ENCODE measurements at regions of chr12 and their contacts with region 1.

Region 1: DNA sequence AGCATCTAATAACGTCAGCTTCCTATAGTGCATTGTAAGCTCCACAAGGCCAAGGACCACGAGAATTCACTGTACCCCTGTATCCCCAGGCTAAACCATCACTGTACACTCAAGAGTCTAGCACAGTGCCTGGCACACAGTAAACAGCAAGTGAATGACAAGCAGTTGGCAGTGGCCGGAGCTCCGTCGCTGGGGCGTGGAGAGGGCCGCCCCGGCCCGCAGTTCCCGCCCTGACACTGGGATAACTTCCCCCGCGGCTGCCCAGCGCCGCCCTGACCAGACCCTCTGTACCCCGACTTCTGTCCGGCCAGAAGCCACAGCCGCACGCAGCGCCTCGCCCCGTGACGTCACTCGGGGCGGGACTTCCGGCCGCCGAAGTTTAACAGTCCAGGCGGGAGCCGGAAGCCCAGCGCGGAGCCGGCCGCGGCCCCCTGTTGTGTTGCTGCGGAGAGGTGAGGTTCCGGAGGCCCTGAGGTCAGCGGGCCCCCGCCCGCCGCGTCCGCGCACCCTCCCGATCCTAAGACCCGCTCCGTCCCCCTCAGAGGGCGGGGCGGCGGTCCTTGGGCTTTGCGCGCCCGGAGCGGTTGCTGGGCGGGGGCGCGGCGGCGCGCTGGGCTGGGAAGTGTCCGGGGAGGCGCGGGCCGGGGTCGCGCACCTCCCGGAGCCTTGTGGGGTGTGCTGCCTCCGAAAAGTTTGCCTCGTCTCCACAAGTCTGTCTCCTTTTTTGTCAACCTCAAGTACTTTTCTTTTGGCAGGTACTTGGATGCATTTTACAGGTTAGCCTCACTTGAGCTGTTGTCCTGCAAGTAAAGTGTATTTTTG is at the start of gene NEDD1:
- DNase-seq: peak; percentile 70 to 89 (median 81)
- ATAC-seq: peak; percentile 90
- H3K4me3 ChIP-seq: peak within 1 kb of the TSS; percentile 84
- H3K4me3 Mint-ChIP-seq: peak within 1 kb of the TSS; percentile 89 to 97 (median 95)
- H3K27ac ChIP-seq: peak within 1 kb of the TSS; percentile 99
- H3K27ac Mint-ChIP-seq: peak within 1 kb of the TSS; percentile 96 to 99 (median 98)
- H3K4me1 ChIP-seq: peaks cover 0 to 12% of the 10 kb centered on the region in 2 donors
- H3K4me1 Mint-ChIP-seq: peaks cover 21 to 53% (median 47%) of the 10 kb centered on the region in 7 donors
- H3K27me3 ChIP-seq: no peaks in the 10 kb centered on the region
- H3K27me3 Mint-ChIP-seq: peaks cover 0 to 12% (median 0%) of the 10 kb centered on the region in 5 donors
- total RNA-seq, gene NEDD1: 18.3 to 52.4 (median 23.2) TPM

Region 2: DNA sequence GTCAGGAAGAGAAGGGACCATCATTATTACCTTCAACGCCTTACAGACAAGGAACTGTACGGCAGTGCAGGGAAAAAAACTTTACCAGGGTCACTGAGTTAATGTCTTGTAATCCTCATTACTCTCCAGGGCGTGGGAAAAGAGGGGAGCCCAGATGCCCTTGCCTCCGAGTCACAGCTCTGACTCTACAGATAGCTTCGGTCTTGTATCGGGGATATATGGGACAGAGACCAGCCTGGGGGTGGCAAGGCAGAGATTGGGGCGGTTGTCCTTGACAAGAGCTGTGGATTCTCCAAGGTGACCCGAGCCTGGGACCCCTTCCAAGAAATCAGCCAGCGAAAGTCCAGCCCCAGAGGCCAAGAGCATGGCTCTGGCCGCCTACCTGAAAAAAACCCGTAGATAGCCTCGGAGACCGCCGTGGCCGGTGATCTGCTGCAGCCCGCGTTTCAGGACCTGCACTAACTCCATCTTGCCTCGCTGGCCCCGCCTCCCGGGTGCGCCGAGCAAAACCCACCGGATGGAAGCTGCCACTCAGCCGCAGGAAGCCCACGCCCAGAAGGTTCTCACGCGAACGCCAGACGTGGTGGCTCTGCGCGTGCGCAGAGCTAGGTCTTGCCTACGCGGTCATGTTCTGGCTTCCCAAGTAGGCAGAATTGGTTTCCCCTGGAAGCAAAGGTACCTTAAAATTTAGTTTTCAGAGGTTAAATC is 1903.7 kb before region 1 on chr12 and contains the start of gene NDUFA12:
- CTCF ChIA-PET with region 1: no interaction called
- POLR2A ChIA-PET with region 1: no interaction called
- intact Hi-C with region 1: loop called in 1 of 2 experiments (anchors 5 kb)
- DNase-seq: peak; percentile 89 to 95 (median 92)
- ATAC-seq: peak; percentile 100
- H3K4me3 ChIP-seq: peak within 1 kb of the TSS; percentile 72
- H3K4me3 Mint-ChIP-seq: peak within 1 kb of the TSS; percentile 87 to 97 (median 96)
- H3K27ac ChIP-seq: peak within 1 kb of the TSS; percentile 84
- H3K27ac Mint-ChIP-seq: peak within 1 kb of the TSS; percentile 86 to 97 (median 95)
- H3K4me1 ChIP-seq: peaks cover 27 to 56% of the 10 kb centered on the region in 2 donors
- H3K4me1 Mint-ChIP-seq: peaks cover 39 to 79% (median 64%) of the 10 kb centered on the region in 7 donors
- H3K27me3 ChIP-seq: no peaks in the 10 kb centered on the region
- H3K27me3 Mint-ChIP-seq: no peaks in the 10 kb centered on the region
- total RNA-seq, gene NDUFA12: 57.8 to 123 (median 68.5) TPM

Region 3: GRCh38 chr12:95942524-95943329 is 964.3 kb before region 1 on chr12 and contains the start of gene CCDC38:
- CTCF ChIA-PET with region 1: interaction called, 3 read pairs
- POLR2A ChIA-PET with region 1: no interaction called
- intact Hi-C with region 1: loop called (anchors 2 to 5 kb)
- DNase-seq: peak; percentile 56 to 86 (median 82)
- ATAC-seq: peak; percentile 97
- H3K4me3 ChIP-seq: peak within 1 kb of the TSS; percentile 93
- H3K4me3 Mint-ChIP-seq: peak within 1 kb of the TSS; percentile 88 to 99 (median 96)
- H3K27ac ChIP-seq: peak within 1 kb of the TSS; percentile 86
- H3K27ac Mint-ChIP-seq: peak within 1 kb of the TSS; percentile 85 to 97 (median 89)
- H3K4me1 ChIP-seq: peaks cover 6% of the 10 kb centered on the region in 2 donors
- H3K4me1 Mint-ChIP-seq: peaks cover 4 to 12% (median 10%) of the 10 kb centered on the region in 7 donors
- H3K27me3 ChIP-seq: no peaks in the 10 kb centered on the region
- H3K27me3 Mint-ChIP-seq: peaks cover 0 to 26% (median 0%) of the 10 kb centered on the region in 5 donors
- total RNA-seq, gene CCDC38: 0.07 to 0.27 TPM in 2 of 5 experiments, not detected in the others

Region 4: DNA sequence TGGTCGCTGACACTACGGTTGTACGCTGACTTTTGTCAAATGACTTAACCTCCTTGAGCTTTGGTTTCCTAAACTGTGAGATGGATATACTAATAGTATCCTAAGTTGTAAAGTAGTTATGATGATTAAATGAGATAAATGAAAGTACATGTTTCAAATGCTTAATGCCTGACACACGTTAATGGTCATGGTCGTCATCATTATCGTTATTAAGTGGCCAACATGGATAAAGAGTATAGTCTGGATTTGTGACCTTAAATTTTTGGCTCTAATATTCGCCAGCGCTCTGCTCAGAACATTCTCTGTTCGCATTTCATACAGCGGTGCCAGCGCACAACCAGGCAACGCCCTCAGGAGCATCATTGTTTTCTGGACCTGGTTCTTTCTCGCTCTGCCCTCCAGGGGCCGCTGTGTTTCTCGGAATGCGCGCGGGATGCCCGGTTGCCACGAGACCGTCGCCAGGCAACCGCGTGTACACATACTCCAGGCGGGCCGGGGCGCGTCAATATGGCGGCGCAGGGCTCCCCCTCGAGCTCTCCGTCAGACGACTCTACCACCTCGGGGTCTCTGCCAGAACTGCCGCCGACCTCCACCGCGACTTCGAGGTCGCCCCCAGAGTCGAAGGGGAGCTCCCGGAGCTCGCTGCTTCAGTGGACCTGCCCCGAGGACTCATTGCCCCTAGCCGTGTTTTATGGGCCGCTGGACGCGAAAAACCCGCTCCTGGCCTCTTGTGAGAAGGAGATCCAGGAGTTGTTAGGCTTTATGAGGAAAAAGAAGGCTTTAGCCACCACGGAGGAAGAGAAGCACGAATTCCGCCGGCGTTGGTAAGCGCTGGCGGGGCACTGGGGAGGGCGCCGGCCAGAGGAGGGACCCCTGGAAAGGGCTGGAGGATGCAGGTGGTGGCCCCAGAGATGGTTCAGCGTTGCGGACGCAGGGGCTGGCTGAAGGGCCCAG is 417.7 kb before region 1 on chr12 and contains the start of gene CFAP54:
- CTCF ChIA-PET with region 1: no interaction called
- POLR2A ChIA-PET with region 1: no interaction called
- intact Hi-C with region 1: loop called in 1 of 2 experiments (anchors 2 kb)
- DNase-seq: peak; percentile 91 to 97 (median 94)
- ATAC-seq: peak; percentile 96
- H3K4me3 ChIP-seq: peak within 1 kb of the TSS; percentile 71
- H3K4me3 Mint-ChIP-seq: peak within 1 kb of the TSS; percentile 77 to 93 (median 88)
- H3K27ac ChIP-seq: peak within 1 kb of the TSS; percentile 66
- H3K27ac Mint-ChIP-seq: peak within 1 kb of the TSS; percentile 68 to 96 (median 89)
- H3K4me1 ChIP-seq: peaks cover 7 to 12% of the 10 kb centered on the region in 2 donors
- H3K4me1 Mint-ChIP-seq: peaks cover 14 to 37% (median 22%) of the 10 kb centered on the region in 7 donors
- H3K27me3 ChIP-seq: no peaks in the 10 kb centered on the region
- H3K27me3 Mint-ChIP-seq: peaks cover 0 to 33% (median 0%) of the 10 kb centered on the region in 5 donors
- total RNA-seq, gene CFAP54: 0.22 to 0.93 (median 0.30) TPM

Region 5: GRCh38 chr12:96985480-96986362 is 78.7 kb after region 1 on chr12:
- CTCF ChIA-PET with region 1: no interaction called
- POLR2A ChIA-PET with region 1: interaction called, 3 read pairs
- intact Hi-C with region 1: loop called (anchors 1 to 2 kb)
- DNase-seq: peak in 8 of 9 donors; percentile 23 to 61 (median 48)
- ATAC-seq: peak; percentile 89
- H3K4me3 ChIP-seq: peak overlapping the region; percentile 52
- H3K4me3 Mint-ChIP-seq: peak overlapping the region; percentile 60 to 90 (median 84)
- H3K27ac ChIP-seq: no peak overlapping the region
- H3K27ac Mint-ChIP-seq: peak overlapping the region in 1 of 9 donors; percentile 49
- H3K4me1 ChIP-seq: peaks cover 0 to 4% of the 10 kb centered on the region in 2 donors
- H3K4me1 Mint-ChIP-seq: peaks cover 7 to 9% (median 8%) of the 10 kb centered on the region in 7 donors
- H3K27me3 ChIP-seq: no peaks in the 10 kb centered on the region
- H3K27me3 Mint-ChIP-seq: peaks cover 13 to 47% (median 33%) of the 10 kb centered on the region in 5 donors

Region 6: GRCh38 chr12:98516184-98516873 is 1609.3 kb after region 1 on chr12:
- CTCF ChIA-PET with region 1: no interaction called
- POLR2A ChIA-PET with region 1: interaction called, 5 read pairs
- intact Hi-C with region 1: loop called in 1 of 2 experiments (anchors 2 kb)
- DNase-seq: peak; percentile 53 to 90 (median 83)
- ATAC-seq: peak; percentile 79
- H3K4me3 ChIP-seq: peak overlapping the region; percentile 92
- H3K4me3 Mint-ChIP-seq: peak overlapping the region; percentile 95 to 100 (median 99)
- H3K27ac ChIP-seq: peak overlapping the region; percentile 95
- H3K27ac Mint-ChIP-seq: peak overlapping the region; percentile 91 to 99 (median 99)
- H3K4me1 ChIP-seq: peaks cover 10 to 26% of the 10 kb centered on the region in 2 donors
- H3K4me1 Mint-ChIP-seq: peaks cover 33 to 69% (median 52%) of the 10 kb centered on the region in 7 donors
- H3K27me3 ChIP-seq: no peaks in the 10 kb centered on the region
- H3K27me3 Mint-ChIP-seq: peaks cover 0 to 1% (median 0%) of the 10 kb centered on the region in 5 donors